BJ (cell line): ENCODE measurements at regions of chr7 and their contacts with region 1.

Region 1: GRCh38 chr7:56079450-56080185 is 13.1 kb downstream of the PHKG1 start:
- DNase-seq: peak; percentile 47
- H3K4me3 ChIP-seq: no peak overlapping the region
- H3K27me3 ChIP-seq: no peaks in the 10 kb centered on the region
- CTCF ChIP-seq: peak; percentile 96

Region 2: GRCh38 chr7:56092789-56093531 is 13.3 kb after region 1 on chr7 and contains the start of gene PHKG1:
- CTCF ChIA-PET with region 1: interaction called, 24 read pairs
- POLR2A ChIA-PET with region 1: no interaction called
- DNase-seq: peak; percentile 67
- H3K4me3 ChIP-seq: no peak within 1 kb of the TSS
- H3K27me3 ChIP-seq: no peaks in the 10 kb centered on the region
- CTCF ChIP-seq: peak; percentile 85
- polyA plus RNA-seq, gene PHKG1: 0.16 and 0.39 TPM in 2 replicates